Naive thymus-derived CD4-positive, alpha-beta T cell (primary cell): ENCODE measurements at regions of chr13 and their contacts with region 1.

Region 1: GRCh38 chr13:99916366-99917103 is 55.0 kb downstream of the ZIC5 start:
- DNase-seq: peak in 6 of 9 donors; percentile 18 to 62 (median 50)
- ATAC-seq: peak; percentile 85
- H3K4me3 ChIP-seq: no peak overlapping the region
- H3K4me3 Mint-ChIP-seq: no peak overlapping the region
- H3K27ac ChIP-seq: no peak overlapping the region
- H3K27ac Mint-ChIP-seq: peak overlapping the region in 1 of 9 donors; percentile 3
- H3K4me1 ChIP-seq: peaks cover 0 to 8% of the 10 kb centered on the region in 2 donors
- H3K4me1 Mint-ChIP-seq: peaks cover 5 to 31% (median 7%) of the 10 kb centered on the region in 7 donors
- H3K27me3 ChIP-seq: no peaks in the 10 kb centered on the region
- H3K27me3 Mint-ChIP-seq: peaks cover 3 to 21% (median 5%) of the 10 kb centered on the region in 5 donors

Region 2: DNA sequence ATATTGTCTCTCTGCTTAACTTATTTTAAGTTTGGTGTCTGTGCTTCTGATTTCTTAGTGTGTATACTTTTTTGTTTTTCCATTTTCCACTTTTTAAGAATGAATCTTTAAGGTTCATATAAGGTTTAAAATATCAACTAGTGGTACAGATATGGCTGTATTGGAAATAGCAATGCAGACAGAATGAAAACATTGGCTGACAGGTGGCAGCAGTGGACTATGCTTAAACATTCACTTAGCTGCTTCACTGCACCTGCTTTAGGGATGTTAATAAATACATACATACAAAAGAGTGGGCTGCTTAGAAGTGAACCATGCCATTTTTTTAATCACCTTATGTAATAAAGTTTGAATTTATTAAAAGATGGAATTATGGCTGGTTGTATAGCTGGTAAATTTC is 388.0 kb before region 1 on chr13:
- CTCF ChIA-PET with region 1: interaction called, 3 read pairs
- POLR2A ChIA-PET with region 1: no interaction called
- intact Hi-C with region 1: loop called in 1 of 2 experiments (anchors 1 kb)
- DNase-seq: peak in 6 of 9 donors; percentile 9 to 57 (median 48)
- ATAC-seq: peak; percentile 68
- H3K4me3 ChIP-seq: no peak overlapping the region
- H3K4me3 Mint-ChIP-seq: peak overlapping the region in 2 of 10 donors; percentile 12 to 25
- H3K27ac ChIP-seq: no peak overlapping the region
- H3K27ac Mint-ChIP-seq: no peak overlapping the region
- H3K4me1 ChIP-seq: peaks cover 8 to 17% of the 10 kb centered on the region in 2 donors
- H3K4me1 Mint-ChIP-seq: peaks cover 33 to 63% (median 47%) of the 10 kb centered on the region in 7 donors
- H3K27me3 ChIP-seq: no peaks in the 10 kb centered on the region
- H3K27me3 Mint-ChIP-seq: no peaks in the 10 kb centered on the region

Region 3: GRCh38 chr13:99871249-99871898 is 45.2 kb before region 1 on chr13:
- CTCF ChIA-PET with region 1: no interaction called
- POLR2A ChIA-PET with region 1: no interaction called
- intact Hi-C with region 1: no loop called
- DNase-seq: no peak
- ATAC-seq: no peak
- H3K4me3 ChIP-seq: no peak overlapping the region
- H3K4me3 Mint-ChIP-seq: no peak overlapping the region
- H3K27ac ChIP-seq: no peak overlapping the region
- H3K27ac Mint-ChIP-seq: no peak overlapping the region
- H3K4me1 ChIP-seq: no peaks in the 10 kb centered on the region
- H3K4me1 Mint-ChIP-seq: no peaks in the 10 kb centered on the region
- H3K27me3 ChIP-seq: no peaks in the 10 kb centered on the region
- H3K27me3 Mint-ChIP-seq: peaks cover 0 to 34% (median 0%) of the 10 kb centered on the region in 5 donors

Region 4: GRCh38 chr13:100203696-100204367 is 287.3 kb after region 1 on chr13:
- CTCF ChIA-PET with region 1: no interaction called
- POLR2A ChIA-PET with region 1: no interaction called
- intact Hi-C with region 1: no loop called
- DNase-seq: peak in 6 of 9 donors; percentile 13 to 57 (median 42)
- ATAC-seq: peak; percentile 78
- H3K4me3 ChIP-seq: peak overlapping the region; percentile 47
- H3K4me3 Mint-ChIP-seq: peak overlapping the region; percentile 25 to 78 (median 68)
- H3K27ac ChIP-seq: no peak overlapping the region
- H3K27ac Mint-ChIP-seq: peak overlapping the region in 2 of 9 donors; percentile 51 to 70
- H3K4me1 ChIP-seq: peaks cover 10 to 14% of the 10 kb centered on the region in 2 donors
- H3K4me1 Mint-ChIP-seq: peaks cover 14 to 25% (median 21%) of the 10 kb centered on the region in 7 donors
- H3K27me3 ChIP-seq: no peaks in the 10 kb centered on the region
- H3K27me3 Mint-ChIP-seq: no peaks in the 10 kb centered on the region

Region 5: DNA sequence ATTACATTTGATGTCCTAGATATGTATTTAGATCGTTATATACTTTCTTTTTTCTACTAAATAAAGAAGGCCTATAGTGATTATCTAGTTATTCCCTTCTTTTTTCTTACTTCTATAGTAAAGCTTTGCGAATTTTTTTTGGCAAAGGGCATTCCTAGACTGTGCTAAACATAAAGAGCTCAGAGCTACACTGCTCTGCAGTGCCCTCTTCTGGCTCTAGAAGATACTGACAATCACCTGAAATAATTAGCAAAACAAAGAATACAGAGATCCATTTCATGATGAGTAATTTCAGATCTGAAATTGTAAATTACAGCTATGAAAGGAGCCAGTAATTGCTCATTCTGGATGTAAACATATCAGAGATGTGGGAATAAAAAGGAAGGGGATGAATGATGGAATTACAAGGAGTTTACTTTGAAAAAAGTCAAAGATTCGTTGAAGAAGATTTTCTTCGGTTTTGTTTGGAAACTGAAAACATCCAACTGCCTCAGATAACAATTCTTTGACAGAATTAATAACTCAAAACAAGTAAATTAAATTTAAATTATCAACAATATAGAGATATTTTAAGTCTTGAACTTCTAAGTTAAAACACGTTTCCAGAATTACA is 1211.3 kb after region 1 on chr13:
- CTCF ChIA-PET with region 1: no interaction called
- POLR2A ChIA-PET with region 1: no interaction called
- intact Hi-C with region 1: loop called in 1 of 2 experiments (anchors 10 kb)
- DNase-seq: peak in 5 of 9 donors; percentile 16 to 36 (median 29)
- ATAC-seq: peak; percentile 80
- H3K4me3 ChIP-seq: no peak overlapping the region
- H3K4me3 Mint-ChIP-seq: no peak overlapping the region
- H3K27ac ChIP-seq: no peak overlapping the region
- H3K27ac Mint-ChIP-seq: no peak overlapping the region
- H3K4me1 ChIP-seq: no peaks in the 10 kb centered on the region
- H3K4me1 Mint-ChIP-seq: peaks cover 0 to 5% (median 0%) of the 10 kb centered on the region in 7 donors
- H3K27me3 ChIP-seq: peaks cover 0 to 2% of the 10 kb centered on the region in 2 donors
- H3K27me3 Mint-ChIP-seq: peaks cover 0 to 20% (median 15%) of the 10 kb centered on the region in 5 donors